ENCODE measurements at regions of chr2 and their contacts with region 1.

Region 1: GRCh38 chr2:226030788-226031646 is 631.5 kb downstream of the NYAP2 start:
- DNase-seq: peak; percentile 10
- H3K4me3 Mint-ChIP-seq: peak overlapping the region; percentile 71
- H3K27ac Mint-ChIP-seq: no peak overlapping the region
- H3K4me1 Mint-ChIP-seq: peaks cover 20% of the 10 kb centered on the region
- H3K27me3 Mint-ChIP-seq: peaks cover 46% of the 10 kb centered on the region

Region 2: DNA sequence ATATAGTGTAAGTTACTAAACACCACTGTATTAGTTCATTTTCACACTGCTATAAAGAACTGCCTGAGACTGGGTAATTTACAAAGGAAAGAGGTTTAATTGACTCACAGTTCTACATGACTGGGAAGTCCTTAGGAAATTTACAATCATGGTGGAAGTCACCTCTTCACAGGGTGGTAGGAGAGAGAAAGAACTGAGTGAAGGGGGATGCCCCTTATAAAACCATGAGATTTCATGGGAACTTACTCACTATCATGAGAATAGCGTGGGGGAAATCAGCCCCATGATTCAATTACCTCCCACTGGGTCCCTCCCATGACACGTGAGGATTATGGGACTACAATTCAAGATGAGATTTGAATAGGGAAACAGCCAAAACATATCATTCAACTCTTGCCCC is 13.5 kb before region 1 on chr2:
- CTCF ChIA-PET with region 1: no interaction called
- intact Hi-C with region 1: loop called (anchors 1 kb)
- DNase-seq: peak; percentile 25
- H3K4me3 Mint-ChIP-seq: no peak overlapping the region
- H3K27ac Mint-ChIP-seq: no peak overlapping the region
- H3K4me1 Mint-ChIP-seq: peaks cover 7% of the 10 kb centered on the region
- H3K27me3 Mint-ChIP-seq: peaks cover 21% of the 10 kb centered on the region

Region 3: DNA sequence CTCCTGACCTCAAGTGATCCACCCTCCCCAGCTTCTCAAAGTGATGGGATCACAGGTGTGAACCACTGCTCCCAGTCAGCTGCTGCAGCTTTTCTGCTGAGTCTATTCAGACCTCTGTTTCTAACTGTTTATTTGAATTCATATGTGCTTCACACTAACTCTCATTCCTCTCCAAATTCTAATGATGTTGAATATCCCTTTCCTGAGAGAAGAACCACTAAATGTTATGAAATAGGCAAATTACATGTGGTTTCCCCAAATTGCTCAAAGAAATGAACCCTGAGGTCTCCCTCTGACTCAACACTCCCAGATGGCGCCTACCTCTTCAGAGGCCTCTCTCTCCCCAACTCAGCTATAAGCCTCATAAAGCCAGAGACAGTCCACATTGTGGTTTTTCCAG is 670.0 kb after region 1 on chr2:
- CTCF ChIA-PET with region 1: no interaction called
- intact Hi-C with region 1: no loop called
- DNase-seq: peak; percentile 15
- H3K4me3 Mint-ChIP-seq: no peak overlapping the region
- H3K27ac Mint-ChIP-seq: no peak overlapping the region
- H3K4me1 Mint-ChIP-seq: no peaks in the 10 kb centered on the region
- H3K27me3 Mint-ChIP-seq: no peaks in the 10 kb centered on the region

Region 4: DNA sequence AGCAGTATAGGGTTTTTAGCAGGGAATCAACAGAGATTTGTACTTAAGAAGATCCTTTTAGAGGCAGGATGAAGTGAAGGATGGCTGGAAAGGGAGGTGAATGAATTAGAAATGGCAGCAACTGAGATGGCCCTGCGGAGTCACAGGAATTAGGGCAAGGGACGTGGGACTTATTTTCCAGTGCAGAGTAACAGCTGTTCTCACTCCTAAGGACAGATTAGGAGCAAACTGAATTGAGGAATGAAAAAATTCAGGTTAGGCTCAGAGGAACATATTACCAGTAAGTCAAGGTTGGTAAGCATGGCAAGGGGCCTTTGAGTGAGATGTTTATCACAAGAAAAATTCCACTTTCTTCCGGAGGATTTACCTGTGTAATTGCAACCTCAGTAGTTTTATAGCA is 1167.8 kb after region 1 on chr2:
- CTCF ChIA-PET with region 1: no interaction called
- intact Hi-C with region 1: no loop called
- DNase-seq: no peak
- H3K4me3 Mint-ChIP-seq: no peak overlapping the region
- H3K27ac Mint-ChIP-seq: no peak overlapping the region
- H3K4me1 Mint-ChIP-seq: no peaks in the 10 kb centered on the region
- H3K27me3 Mint-ChIP-seq: peaks cover 6% of the 10 kb centered on the region